ENCODE measurements at regions of chr9 and their contacts with region 1.

Region 1: GRCh38 chr9:128117613-128118471 is 9.7 kb downstream of the PTGES2 start:
- DNase-seq: peak; percentile 98
- H3K4me3 Mint-ChIP-seq: no peak overlapping the region
- H3K27ac Mint-ChIP-seq: no peak overlapping the region
- H3K4me1 Mint-ChIP-seq: peaks cover 10% of the 10 kb centered on the region
- H3K27me3 Mint-ChIP-seq: no peaks in the 10 kb centered on the region

Region 2: DNA sequence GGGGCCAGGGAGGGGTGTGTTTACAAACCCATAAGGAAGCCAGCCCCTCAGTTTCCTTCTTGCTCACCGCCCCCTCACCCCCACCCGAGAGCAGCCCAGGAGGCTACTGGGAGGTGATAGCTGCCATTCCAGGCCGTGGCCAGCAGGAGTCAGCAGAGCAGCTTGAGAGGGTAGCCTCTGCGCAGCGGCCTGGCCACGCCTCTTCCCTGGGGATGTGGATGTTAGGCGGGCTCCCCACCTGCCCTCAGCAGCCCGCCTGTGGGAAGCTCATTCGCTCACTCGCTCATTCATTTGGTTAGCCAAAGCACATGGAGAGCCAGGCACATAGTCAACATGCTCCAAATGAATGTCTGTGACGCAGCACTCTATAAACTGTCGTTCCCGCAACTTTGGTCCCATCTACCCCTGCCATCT is 174.1 kb before region 1 on chr9:
- CTCF ChIA-PET with region 1: interaction called, 6 read pairs
- intact Hi-C with region 1: loop called (anchors 1 kb)
- DNase-seq: peak; percentile 89
- H3K4me3 Mint-ChIP-seq: no peak overlapping the region
- H3K27ac Mint-ChIP-seq: peak overlapping the region; percentile 82
- H3K4me1 Mint-ChIP-seq: peaks cover 37% of the 10 kb centered on the region
- H3K27me3 Mint-ChIP-seq: no peaks in the 10 kb centered on the region

Region 3: DNA sequence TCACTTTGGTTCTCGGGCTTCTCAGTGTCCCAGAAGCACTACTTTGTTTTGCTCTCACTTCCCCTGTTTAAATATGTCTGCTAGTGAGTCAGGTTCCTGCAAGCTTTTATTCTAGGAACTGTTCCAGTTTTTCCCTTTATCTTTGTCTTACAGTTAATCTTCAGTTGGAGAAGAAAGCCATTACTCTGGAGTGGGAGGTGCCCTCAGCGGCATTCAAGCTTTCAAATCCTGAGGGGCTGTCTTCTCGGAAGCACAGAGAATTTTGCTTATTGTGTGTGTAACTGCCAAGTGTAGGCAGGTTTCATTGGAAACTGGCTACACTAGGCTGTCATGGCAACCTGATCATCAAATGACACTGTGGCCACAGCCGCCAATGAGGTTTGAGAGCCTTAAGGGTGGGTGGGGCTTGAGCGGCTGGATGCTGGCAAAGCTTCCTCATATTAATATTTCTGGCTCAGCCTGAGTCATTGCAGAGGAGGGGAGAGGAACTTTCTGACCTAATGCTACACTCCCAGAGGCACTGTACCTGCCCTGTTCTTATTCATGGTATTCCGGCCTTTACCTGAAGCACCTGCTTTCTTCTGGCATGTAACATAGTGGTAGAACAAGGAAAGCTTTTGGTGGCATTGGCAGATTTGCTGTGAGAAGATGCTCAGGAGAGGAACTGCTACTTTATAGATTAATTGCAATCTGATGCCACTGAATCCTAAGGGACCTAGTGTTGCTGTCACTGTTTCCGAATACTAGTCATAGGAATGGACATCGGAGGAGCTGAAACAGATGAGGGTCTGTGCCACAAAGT is 23.5 kb before region 1 on chr9:
- CTCF ChIA-PET with region 1: interaction called, 22 read pairs
- intact Hi-C with region 1: no loop called
- DNase-seq: peak; percentile 91
- H3K4me3 Mint-ChIP-seq: peak overlapping the region; percentile 65
- H3K27ac Mint-ChIP-seq: peak overlapping the region; percentile 95
- H3K4me1 Mint-ChIP-seq: peaks cover 87% of the 10 kb centered on the region
- H3K27me3 Mint-ChIP-seq: no peaks in the 10 kb centered on the region

Region 4: DNA sequence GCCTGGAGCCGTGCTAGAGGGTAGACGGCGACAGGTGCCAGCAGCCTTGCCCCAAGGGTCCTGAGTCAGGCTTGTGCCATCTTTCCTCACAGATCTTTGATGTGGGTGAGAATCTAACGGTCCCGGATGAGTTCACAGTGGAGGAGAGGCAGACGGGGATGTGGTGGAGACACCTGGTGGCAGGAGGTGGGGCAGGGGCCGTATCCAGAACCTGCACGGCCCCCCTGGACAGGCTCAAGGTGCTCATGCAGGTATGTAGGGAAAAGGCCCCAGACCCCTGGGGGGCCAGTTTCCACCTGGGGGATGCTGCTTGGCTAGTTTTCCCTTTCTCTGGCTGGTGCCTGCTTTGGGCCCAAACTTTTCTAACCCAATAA is 14.3 kb before region 1 on chr9:
- CTCF ChIA-PET with region 1: interaction called, 19 read pairs
- intact Hi-C with region 1: no loop called
- DNase-seq: peak; percentile 76
- H3K4me3 Mint-ChIP-seq: no peak overlapping the region
- H3K27ac Mint-ChIP-seq: peak overlapping the region; percentile 44
- H3K4me1 Mint-ChIP-seq: peaks cover 39% of the 10 kb centered on the region
- H3K27me3 Mint-ChIP-seq: no peaks in the 10 kb centered on the region

Region 5: DNA sequence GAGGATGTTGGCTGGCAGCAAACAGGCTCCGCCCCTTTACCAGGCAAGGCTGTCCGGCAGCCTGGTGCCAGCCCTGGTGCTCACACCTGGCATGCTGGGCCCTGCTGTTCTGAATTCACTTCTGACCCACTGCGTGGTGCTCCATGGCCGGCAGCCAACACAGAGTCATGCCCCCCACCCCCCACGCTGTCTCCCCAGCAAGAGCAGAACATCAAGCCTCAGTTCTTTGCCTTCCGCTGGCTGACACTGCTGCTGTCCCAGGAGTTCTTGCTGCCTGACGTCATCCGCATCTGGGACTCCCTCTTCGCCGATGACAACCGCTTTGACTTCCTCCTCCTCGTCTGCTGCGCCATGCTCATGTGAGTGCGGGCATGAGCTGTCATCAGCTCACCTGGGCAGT is 687.8 kb after region 1 on chr9:
- CTCF ChIA-PET with region 1: no interaction called
- intact Hi-C with region 1: no loop called
- DNase-seq: no peak
- H3K4me3 Mint-ChIP-seq: no peak overlapping the region
- H3K27ac Mint-ChIP-seq: no peak overlapping the region
- H3K4me1 Mint-ChIP-seq: no peaks in the 10 kb centered on the region
- H3K27me3 Mint-ChIP-seq: no peaks in the 10 kb centered on the region